H1 (cell line): ENCODE measurements at regions of chr9 and their contacts with region 1.

Region 1: DNA sequence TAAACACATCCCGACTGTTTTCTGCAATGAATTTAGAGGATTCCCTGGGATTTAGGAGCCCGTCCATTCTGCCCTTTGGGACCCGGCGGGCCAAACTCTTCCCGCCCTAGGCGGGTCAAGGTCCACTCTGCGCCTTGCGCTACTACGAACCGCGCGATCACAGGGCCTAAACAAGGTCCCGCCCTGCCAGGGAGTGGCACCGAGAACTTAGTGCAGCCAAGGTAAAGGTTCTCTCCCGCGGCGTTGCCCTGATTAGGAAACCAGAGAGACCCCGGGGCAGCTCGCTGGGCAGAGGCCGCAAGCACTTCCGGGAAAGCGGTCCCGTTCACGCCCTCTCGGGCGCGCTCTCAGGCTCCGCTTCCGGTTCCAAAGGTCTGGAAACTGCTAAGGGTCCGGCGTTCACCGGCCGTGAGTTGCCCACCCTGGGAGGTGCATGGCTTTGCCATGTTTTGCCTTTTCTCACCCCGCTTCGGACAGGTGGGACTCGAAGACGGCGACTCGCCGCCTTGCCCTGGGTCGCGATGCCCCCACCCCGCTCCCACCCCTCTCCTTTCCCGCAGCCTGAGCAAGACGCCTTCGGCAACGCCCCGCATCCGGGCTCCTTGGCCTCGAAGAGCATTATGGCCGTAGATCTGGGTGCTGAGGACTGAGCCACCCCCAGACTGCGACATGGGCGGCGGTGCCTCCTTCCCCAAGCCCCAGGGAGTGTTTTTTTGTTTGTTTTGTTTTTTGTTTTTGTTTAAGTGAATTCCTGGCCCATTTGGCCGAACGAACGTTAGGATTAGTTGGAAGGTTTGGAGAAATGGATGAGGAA is 23.4 kb downstream of the HNRNPK start:
- DNase-seq: no peak
- H3K4me3 ChIP-seq: peak overlapping the region; percentile 13 to 50 (median 24); a peak in 6 of 8 replicates
- H3K27ac ChIP-seq: no peak overlapping the region
- H3K4me1 ChIP-seq: no peaks in the 10 kb centered on the region
- H3K27me3 ChIP-seq: no peaks in the 10 kb centered on the region
- CTCF ChIP-seq: no peak
- EP300 ChIP-seq: no peak
- POLR2A ChIP-seq: no peak
- RAD21 ChIP-seq: no peak; a peak in 1 of 4 replicates

Region 2: GRCh38 chr9:83972286-83972685 is 15.6 kb after region 1 on chr9:
- CTCF ChIA-PET with region 1: interaction called, 4 read pairs
- POLR2A ChIA-PET with region 1: interaction called, 269 read pairs
- DNase-seq: no peak
- H3K4me3 ChIP-seq: no peak overlapping the region
- H3K27ac ChIP-seq: no peak overlapping the region
- H3K4me1 ChIP-seq: no peaks in the 10 kb centered on the region
- H3K27me3 ChIP-seq: no peaks in the 10 kb centered on the region
- CTCF ChIP-seq: no peak
- EP300 ChIP-seq: no peak
- POLR2A ChIP-seq: no peak
- RAD21 ChIP-seq: no peak